Activated CD4-positive, alpha-beta T cell treated with anti-CD3 and anti-CD28 coated beads, Interleukin-2, amount 10 ng/mL, durations not matched to agents 24 days and 14 days (primary cell): ENCODE measurements at regions of chr1 and their contacts with region 1.

Region 1: GRCh38 chr1:217281348-217281747 is 349.5 kb downstream of the GPATCH2 start:
- DNase-seq: no peak
- H3K4me3 Mint-ChIP-seq: no peak overlapping the region
- H3K27ac Mint-ChIP-seq: no peak overlapping the region
- H3K4me1 Mint-ChIP-seq: no peaks in the 10 kb centered on the region
- H3K27me3 Mint-ChIP-seq: no peaks in the 10 kb centered on the region

Region 2: GRCh38 chr1:217164403-217164802 is 116.9 kb before region 1 on chr1:
- intact Hi-C with region 1: no loop called
- DNase-seq: no peak
- H3K4me3 Mint-ChIP-seq: no peak overlapping the region
- H3K27ac Mint-ChIP-seq: no peak overlapping the region
- H3K4me1 Mint-ChIP-seq: no peaks in the 10 kb centered on the region
- H3K27me3 Mint-ChIP-seq: no peaks in the 10 kb centered on the region

Region 3: GRCh38 chr1:217322834-217323233 is 41.5 kb after region 1 on chr1:
- intact Hi-C with region 1: no loop called
- DNase-seq: no peak
- H3K4me3 Mint-ChIP-seq: no peak overlapping the region
- H3K27ac Mint-ChIP-seq: no peak overlapping the region
- H3K4me1 Mint-ChIP-seq: no peaks in the 10 kb centered on the region
- H3K27me3 Mint-ChIP-seq: no peaks in the 10 kb centered on the region

Region 4: DNA sequence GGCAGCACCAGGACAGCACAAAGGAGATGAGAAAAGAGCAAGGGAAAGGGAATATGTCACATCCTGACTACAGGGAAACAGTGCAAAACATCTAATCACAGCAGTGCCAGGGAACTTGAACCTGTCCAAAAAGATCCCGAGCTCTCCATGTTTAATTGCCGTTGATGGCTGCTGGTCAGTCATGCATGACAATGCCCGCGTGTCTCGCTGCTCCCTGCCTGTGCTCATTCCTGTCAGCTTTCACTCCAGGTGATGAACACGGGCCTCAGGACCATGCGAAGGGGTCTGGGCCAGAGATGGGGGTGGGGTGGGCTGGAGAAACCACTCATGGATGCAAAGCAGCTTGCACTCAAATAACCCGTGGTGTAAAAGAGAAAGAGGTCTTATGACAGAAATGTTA is 62.6 kb after region 1 on chr1:
- intact Hi-C with region 1: loop called (anchors 10 kb)
- DNase-seq: no peak
- H3K4me3 Mint-ChIP-seq: no peak overlapping the region
- H3K27ac Mint-ChIP-seq: no peak overlapping the region
- H3K4me1 Mint-ChIP-seq: peaks cover 5% of the 10 kb centered on the region
- H3K27me3 Mint-ChIP-seq: no peaks in the 10 kb centered on the region

Region 5: DNA sequence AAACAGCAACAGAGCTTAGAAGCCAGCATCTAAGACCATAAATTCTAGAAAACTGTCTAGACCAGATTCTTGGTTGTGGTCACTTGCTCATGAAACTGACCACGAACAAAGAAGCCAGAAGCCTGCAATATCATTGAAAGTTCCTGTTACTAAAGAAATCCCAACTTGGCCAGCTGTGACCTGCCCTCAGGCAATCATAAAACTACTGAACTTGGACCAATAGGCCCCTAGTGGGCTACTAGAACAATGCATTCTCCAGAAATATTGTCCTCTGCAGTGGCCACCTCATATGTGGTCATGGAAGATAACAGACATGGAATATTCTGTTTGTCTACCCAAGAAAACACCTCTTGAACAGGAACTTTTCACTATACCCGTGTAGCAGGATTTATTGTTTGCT is 437.5 kb after region 1 on chr1:
- intact Hi-C with region 1: no loop called
- DNase-seq: no peak
- H3K4me3 Mint-ChIP-seq: no peak overlapping the region
- H3K27ac Mint-ChIP-seq: no peak overlapping the region
- H3K4me1 Mint-ChIP-seq: no peaks in the 10 kb centered on the region
- H3K27me3 Mint-ChIP-seq: no peaks in the 10 kb centered on the region